Dendritic cell treated with granulocyte-macrophage colony-stimulating factor and Interleukin-4, amounts not matched to agents 40 ng/mL and 50 ng/mL, for 4 days (primary cell): ENCODE measurements at regions of chr11 and their contacts with region 1.

Region 1: GRCh38 chr11:33722579-33723225 is 13.5 kb downstream of the CD59 start:
- H3K4me3 Mint-ChIP-seq: peak overlapping the region; percentile 65
- H3K27ac Mint-ChIP-seq: peak overlapping the region; percentile 97
- H3K4me1 Mint-ChIP-seq: peaks cover 72% of the 10 kb centered on the region
- H3K27me3 Mint-ChIP-seq: no peaks in the 10 kb centered on the region

Region 2: GRCh38 chr11:33736148-33736809 is 13.6 kb after region 1 on chr11 and contains the start of gene CD59:
- intact Hi-C with region 1: loop called (anchors 1 kb)
- H3K4me3 Mint-ChIP-seq: peak within 1 kb of the TSS; percentile 85
- H3K27ac Mint-ChIP-seq: peak within 1 kb of the TSS; percentile 85
- H3K4me1 Mint-ChIP-seq: peaks cover 45% of the 10 kb centered on the region
- H3K27me3 Mint-ChIP-seq: peaks cover 35% of the 10 kb centered on the region